H1 (cell line): ENCODE measurements at regions of chr3 and their contacts with region 1.

Region 1: GRCh38 chr3:32781210-32781968 is 36.4 kb upstream of the TRIM71 start:
- DNase-seq: peak; percentile 86 to 94
- H3K4me3 ChIP-seq: peak overlapping the region; percentile 45 to 65 (median 51)
- H3K27ac ChIP-seq: peak overlapping the region; percentile 94
- H3K4me1 ChIP-seq: peaks cover 16 to 31% (median 22%) of the 10 kb centered on the region in 4 experiments; a peak in 6 of 7 replicates
- H3K27me3 ChIP-seq: no peaks in the 10 kb centered on the region
- CTCF ChIP-seq: peak; percentile 77 to 88 (median 80)
- EP300 ChIP-seq: peak in 1 of 2 experiments; percentile 92; a peak in 2 of 3 replicates
- POLR2A ChIP-seq: peak; percentile 51 to 82; a peak in 2 of 3 replicates
- RAD21 ChIP-seq: peak; percentile 63 to 75

Region 2: GRCh38 chr3:32614956-32615355 is 166.4 kb before region 1 on chr3:
- CTCF ChIA-PET with region 1: no interaction called
- POLR2A ChIA-PET with region 1: no interaction called
- DNase-seq: no peak
- H3K4me3 ChIP-seq: no peak overlapping the region
- H3K27ac ChIP-seq: no peak overlapping the region
- H3K4me1 ChIP-seq: no peaks in the 10 kb centered on the region
- H3K27me3 ChIP-seq: no peaks in the 10 kb centered on the region
- CTCF ChIP-seq: no peak
- EP300 ChIP-seq: no peak
- POLR2A ChIP-seq: no peak
- RAD21 ChIP-seq: no peak

Region 3: DNA sequence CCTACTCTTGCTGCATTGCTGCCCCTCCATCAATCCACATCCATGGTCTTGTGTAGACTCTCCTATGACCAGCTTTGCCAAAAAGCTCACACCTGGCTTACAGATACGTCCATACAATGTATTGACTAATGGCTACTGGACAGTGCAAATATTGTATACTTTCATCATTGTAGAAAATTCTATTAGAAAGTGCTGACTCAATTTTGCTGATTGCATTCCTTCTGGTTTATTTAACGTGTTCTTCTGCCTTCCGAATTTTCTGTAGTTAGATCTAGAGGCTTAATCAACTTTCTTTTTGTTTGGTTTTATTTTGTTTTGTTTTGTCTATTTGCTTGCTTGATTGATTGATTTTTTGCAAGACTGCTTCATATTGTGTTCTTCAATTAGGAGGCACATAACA is 126.2 kb before region 1 on chr3:
- CTCF ChIA-PET with region 1: no interaction called
- POLR2A ChIA-PET with region 1: no interaction called
- DNase-seq: no peak
- H3K4me3 ChIP-seq: no peak overlapping the region
- H3K27ac ChIP-seq: no peak overlapping the region
- H3K4me1 ChIP-seq: no peaks in the 10 kb centered on the region
- H3K27me3 ChIP-seq: no peaks in the 10 kb centered on the region
- CTCF ChIP-seq: no peak
- EP300 ChIP-seq: no peak
- POLR2A ChIP-seq: no peak
- RAD21 ChIP-seq: no peak

Region 4: DNA sequence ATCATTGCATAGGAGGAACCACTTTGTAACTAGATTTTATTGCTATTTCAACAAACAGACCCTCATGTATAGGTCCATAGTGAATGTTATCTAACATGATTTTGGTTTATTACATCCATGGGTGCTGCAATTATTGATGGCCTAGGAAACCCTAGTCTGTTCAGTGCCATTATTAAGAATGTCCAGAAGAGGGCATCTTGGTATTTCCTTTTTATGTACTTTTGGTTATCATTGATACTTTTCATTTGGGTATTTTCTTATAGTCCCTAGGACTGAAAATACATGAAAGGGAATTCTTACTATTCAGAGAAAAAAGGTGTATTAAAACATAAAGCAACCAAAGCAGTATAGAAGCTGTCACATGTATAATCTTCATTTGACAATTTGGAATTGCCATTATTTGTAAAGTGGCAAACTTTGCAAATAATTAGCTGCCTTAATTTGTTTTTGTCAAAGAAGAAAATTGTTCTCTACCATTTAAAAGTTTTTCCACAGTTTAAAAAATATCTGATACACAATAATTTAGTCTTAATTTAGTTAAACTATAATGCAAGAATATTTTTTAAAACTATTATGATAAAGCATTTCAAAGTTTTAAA is 47.7 kb before region 1 on chr3:
- CTCF ChIA-PET with region 1: interaction called, 8 read pairs
- POLR2A ChIA-PET with region 1: interaction called, 23 read pairs
- DNase-seq: no peak
- H3K4me3 ChIP-seq: no peak overlapping the region
- H3K27ac ChIP-seq: no peak overlapping the region
- H3K4me1 ChIP-seq: peaks cover 0 to 4% (median 2%) of the 10 kb centered on the region in 4 experiments; a peak in 2 of 7 replicates
- H3K27me3 ChIP-seq: no peaks in the 10 kb centered on the region
- CTCF ChIP-seq: peak in 2 of 3 experiments; percentile 22 to 49; a peak in 2 of 4 replicates
- EP300 ChIP-seq: no peak
- POLR2A ChIP-seq: no peak
- RAD21 ChIP-seq: peak; percentile 63 to 64

Region 5: GRCh38 chr3:32794487-32795308 is 13.3 kb after region 1 on chr3:
- CTCF ChIA-PET with region 1: interaction called, 11 read pairs
- POLR2A ChIA-PET with region 1: interaction called, 74 read pairs
- DNase-seq: no peak
- H3K4me3 ChIP-seq: no peak overlapping the region
- H3K27ac ChIP-seq: 0 out of 2 replicates have a peak overlapping the region, but pooled peaks have one; percentile 6
- H3K4me1 ChIP-seq: peaks cover 0 to 3% (median under 1%) of the 10 kb centered on the region in 4 experiments; a peak in 3 of 7 replicates
- H3K27me3 ChIP-seq: no peaks in the 10 kb centered on the region
- CTCF ChIP-seq: no peak
- EP300 ChIP-seq: no peak
- POLR2A ChIP-seq: no peak
- RAD21 ChIP-seq: no peak

Region 6: DNA sequence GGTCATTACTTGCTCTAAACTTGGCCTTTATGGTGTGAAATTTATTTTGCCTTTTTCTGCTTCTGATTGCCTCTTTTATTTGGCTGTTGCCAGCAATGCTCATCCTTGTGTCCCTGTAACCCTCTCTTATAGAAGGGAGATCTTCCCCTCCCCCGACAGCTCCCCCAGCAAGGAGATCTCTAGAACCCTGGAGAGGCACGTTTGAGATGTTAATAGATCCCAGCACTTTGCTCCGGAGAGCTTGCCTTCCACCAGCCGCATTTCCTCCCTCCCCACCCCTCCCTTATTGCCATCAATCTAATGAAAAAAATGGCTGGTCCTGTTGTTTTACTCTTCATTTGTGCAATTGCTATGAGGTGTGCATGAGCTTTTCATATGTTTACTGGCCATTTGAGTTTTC is 54.6 kb after region 1 on chr3:
- CTCF ChIA-PET with region 1: interaction called, 4 read pairs
- POLR2A ChIA-PET with region 1: interaction called, 35 read pairs
- DNase-seq: peak in 1 of 2 experiments; percentile 73
- H3K4me3 ChIP-seq: peak overlapping the region; percentile 17 to 57 (median 37); a peak in 6 of 8 replicates
- H3K27ac ChIP-seq: no peak overlapping the region
- H3K4me1 ChIP-seq: peaks cover 26 to 55% (median 37%) of the 10 kb centered on the region in 4 experiments
- H3K27me3 ChIP-seq: no peaks in the 10 kb centered on the region
- CTCF ChIP-seq: no peak
- EP300 ChIP-seq: peak in 1 of 2 experiments; percentile 62; a peak in 1 of 3 replicates
- POLR2A ChIP-seq: peak in 1 of 2 experiments; percentile 67; a peak in 2 of 3 replicates
- RAD21 ChIP-seq: peak in 1 of 2 experiments; percentile 10; a peak in 1 of 4 replicates

Region 7: GRCh38 chr3:32901432-32902409 is 120.3 kb after region 1 on chr3:
- CTCF ChIA-PET with region 1: interaction called, 4 read pairs
- POLR2A ChIA-PET with region 1: interaction called, 10 read pairs
- DNase-seq: peak in 1 of 2 experiments; percentile 62
- H3K4me3 ChIP-seq: peak overlapping the region in 3 of 4 experiments; percentile 30 to 40 (median 31); a peak in 4 of 8 replicates
- H3K27ac ChIP-seq: no peak overlapping the region
- H3K4me1 ChIP-seq: no peaks in the 10 kb centered on the region
- H3K27me3 ChIP-seq: no peaks in the 10 kb centered on the region
- CTCF ChIP-seq: peak; percentile 26 to 41 (median 37); a peak in 3 of 4 replicates
- EP300 ChIP-seq: no peak
- POLR2A ChIP-seq: peak in 1 of 2 experiments; percentile 69; a peak in 1 of 3 replicates
- RAD21 ChIP-seq: peak in 1 of 2 experiments; percentile 6; a peak in 1 of 4 replicates